Mucosa of descending colon (tissue), 3 donors: ENCODE measurements at regions of chr3 and their contacts with region 1.

Region 1: GRCh38 chr3:11651900-11652299 is 8.2 kb upstream of the VGLL4 start:
- DNase-seq: no peak
- ATAC-seq: no peak
- H3K4me3 ChIP-seq: no peak overlapping the region
- H3K4me1 ChIP-seq: no peaks in the 10 kb centered on the region
- CTCF ChIP-seq: no peak

Region 2: DNA sequence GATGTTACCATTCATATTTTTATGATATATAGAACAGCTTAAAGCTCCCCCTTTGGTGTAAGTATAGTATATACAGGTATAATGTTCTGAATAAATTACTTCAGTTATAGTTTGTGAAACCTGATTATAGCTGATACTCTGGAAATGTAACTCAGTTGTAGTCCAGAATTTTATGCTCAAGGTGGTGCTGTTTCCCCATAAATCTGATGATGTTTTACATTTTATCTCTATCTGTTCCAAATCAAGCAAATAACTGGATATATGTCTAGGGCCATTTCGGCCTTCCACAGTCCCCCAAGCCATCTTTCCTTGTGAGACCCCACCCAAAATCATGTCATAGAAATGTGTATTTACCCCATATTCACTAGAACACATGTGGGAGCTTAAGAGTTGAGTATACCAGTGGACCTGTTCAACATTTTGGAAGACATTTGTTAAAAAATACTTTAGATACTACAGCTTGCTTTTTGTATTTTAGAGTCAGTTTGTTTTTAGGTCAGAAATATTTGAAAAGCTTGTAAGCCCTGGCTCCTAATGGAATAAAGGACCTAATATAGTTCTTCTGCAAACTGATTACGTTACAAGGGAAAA is 272.6 kb before region 1 on chr3:
- intact Hi-C with region 1: loop called (anchors 2 kb)
- DNase-seq: peak in 1 of 3 donors; percentile 63
- ATAC-seq: peak; percentile 60
- H3K4me3 ChIP-seq: no peak overlapping the region
- H3K4me1 ChIP-seq: no peaks in the 10 kb centered on the region
- CTCF ChIP-seq: no peak

Region 3: GRCh38 chr3:11539677-11540076 is 112.2 kb before region 1 on chr3:
- intact Hi-C with region 1: no loop called
- DNase-seq: no peak
- ATAC-seq: no peak
- H3K4me3 ChIP-seq: no peak overlapping the region
- H3K4me1 ChIP-seq: no peaks in the 10 kb centered on the region
- CTCF ChIP-seq: no peak

Region 4: GRCh38 chr3:11606090-11606784 is 45.7 kb before region 1 on chr3:
- intact Hi-C with region 1: no loop called
- DNase-seq: no peak
- ATAC-seq: no peak
- H3K4me3 ChIP-seq: no peak overlapping the region
- H3K4me1 ChIP-seq: peaks cover 19% of the 10 kb centered on the region
- CTCF ChIP-seq: no peak

Region 5: GRCh38 chr3:11803977-11804892 is 152.3 kb after region 1 on chr3:
- intact Hi-C with region 1: loop called in 1 of 2 experiments (anchors 10 kb)
- DNase-seq: peak in 1 of 3 donors; percentile 51
- ATAC-seq: peak; percentile 87
- H3K4me3 ChIP-seq: no peak overlapping the region
- H3K4me1 ChIP-seq: no peaks in the 10 kb centered on the region
- CTCF ChIP-seq: peak; percentile 18